Sigmoid colon (tissue), 7 donors: ENCODE measurements at regions of chr1 and their contacts with region 1.

Region 1: GRCh38 chr1:207797229-207797961 is 45.5 kb downstream of the CD46 start:
- DNase-seq: peak; percentile 88
- H3K4me3 ChIP-seq: no peak overlapping the region
- H3K27ac ChIP-seq: peak overlapping the region; percentile 17 to 55 (median 44)
- H3K4me1 ChIP-seq: peaks cover 0 to 9% (median 0%) of the 10 kb centered on the region in 4 donors
- H3K27me3 ChIP-seq: no peaks in the 10 kb centered on the region
- CTCF ChIP-seq: peak; percentile 61 to 80 (median 72)
- EP300 ChIP-seq: no peak
- POLR2A ChIP-seq: no peak

Region 2: DNA sequence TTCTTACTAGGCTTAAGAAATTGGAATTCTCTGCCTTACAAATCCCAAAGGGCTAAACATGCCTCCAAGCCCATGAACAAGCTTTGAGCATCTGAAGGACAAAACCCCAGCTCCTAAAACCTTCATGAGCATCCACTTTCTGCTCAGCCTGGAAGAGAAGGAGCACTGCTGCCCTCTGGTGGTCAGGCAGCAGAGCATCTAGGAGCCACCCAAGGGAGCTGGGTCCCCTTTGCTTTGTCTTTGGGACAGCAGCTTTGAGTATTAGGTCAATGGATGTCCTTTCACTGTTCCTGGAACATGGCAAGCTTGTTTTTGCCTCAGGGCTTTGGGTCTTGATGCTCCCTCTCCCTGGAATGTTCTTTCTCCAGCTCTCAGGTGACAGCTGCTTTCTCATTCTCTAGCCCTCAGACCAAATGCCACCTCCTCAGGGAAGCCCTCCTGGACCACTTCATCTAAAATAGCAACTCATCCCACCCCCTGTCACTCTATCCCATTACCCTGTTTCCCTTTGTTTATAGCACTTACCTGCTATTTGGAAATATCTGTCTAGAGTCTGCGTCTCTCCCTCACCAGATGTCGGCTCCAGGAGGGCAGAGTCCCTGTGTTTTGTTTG is 1819.9 kb before region 1 on chr1:
- intact Hi-C with region 1: no loop called
- DNase-seq: peak; percentile 76
- H3K4me3 ChIP-seq: no peak overlapping the region
- H3K27ac ChIP-seq: no peak overlapping the region
- H3K4me1 ChIP-seq: peaks cover 0 to 4% (median 0%) of the 10 kb centered on the region in 4 donors
- H3K27me3 ChIP-seq: no peaks in the 10 kb centered on the region
- CTCF ChIP-seq: peak; percentile 64 to 92 (median 90)
- EP300 ChIP-seq: no peak
- POLR2A ChIP-seq: no peak

Region 3: DNA sequence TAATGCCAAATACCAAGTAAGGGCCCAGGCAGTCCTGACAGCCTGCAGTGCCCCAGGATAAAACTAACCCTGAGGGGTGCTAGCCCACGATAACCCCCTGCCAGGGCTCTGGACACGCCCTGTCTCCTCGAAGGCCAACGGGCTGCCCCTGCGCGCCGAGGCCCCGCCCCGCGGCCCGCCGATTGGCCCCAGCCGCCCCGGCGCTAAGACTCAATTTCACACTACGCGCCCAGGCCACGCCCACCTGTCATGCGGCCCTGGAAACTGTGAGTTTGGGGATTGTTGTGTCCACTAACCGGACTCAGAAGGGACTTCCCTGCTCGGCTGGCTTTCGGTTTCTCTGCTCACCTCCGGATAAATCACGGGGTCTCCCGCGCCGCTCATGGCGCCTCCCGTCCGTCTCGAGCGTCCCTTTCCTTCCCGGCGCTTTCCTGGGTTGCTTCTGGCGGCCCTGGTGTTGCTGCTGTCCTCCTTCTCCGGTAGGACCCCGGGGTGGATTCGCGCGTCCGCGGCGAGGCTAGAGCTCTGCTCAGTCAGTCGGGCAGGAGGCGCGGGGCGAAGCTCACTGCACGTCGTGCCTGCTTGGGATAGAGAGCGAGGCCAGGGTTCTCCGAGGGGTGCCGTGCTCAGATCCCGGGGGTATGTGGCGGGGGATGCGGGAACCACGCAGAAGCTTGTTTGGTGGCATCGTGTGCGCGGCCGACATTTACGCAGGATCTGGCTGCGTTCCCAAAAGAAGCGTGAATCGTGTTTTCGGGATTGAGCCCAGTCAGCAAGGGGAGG is 152.4 kb before region 1 on chr1 and contains the start of gene CR1L:
- intact Hi-C with region 1: loop called (anchors 10 kb)
- DNase-seq: peak; percentile 83
- H3K4me3 ChIP-seq: peak within 1 kb of the TSS; percentile 45 to 60 (median 50)
- H3K27ac ChIP-seq: no peak within 1 kb of the TSS
- H3K4me1 ChIP-seq: peaks cover 0 to 13% (median 7%) of the 10 kb centered on the region in 4 donors
- H3K27me3 ChIP-seq: no peaks in the 10 kb centered on the region
- CTCF ChIP-seq: no peak
- EP300 ChIP-seq: no peak
- POLR2A ChIP-seq: no peak
- total RNA-seq, gene CR1L: not detected

Region 4: GRCh38 chr1:207751790-207752455 is 45.5 kb before region 1 on chr1 and contains the start of gene CD46:
- intact Hi-C with region 1: loop called (anchors 5 kb)
- DNase-seq: peak; percentile 98
- H3K4me3 ChIP-seq: peak within 1 kb of the TSS; percentile 75 to 93 (median 79)
- H3K27ac ChIP-seq: peak within 1 kb of the TSS; percentile 82 to 94 (median 88)
- H3K4me1 ChIP-seq: peaks cover 0 to 50% (median 42%) of the 10 kb centered on the region in 4 donors
- H3K27me3 ChIP-seq: no peaks in the 10 kb centered on the region
- CTCF ChIP-seq: no peak
- EP300 ChIP-seq: peak in 1 of 4 donors; percentile 32
- POLR2A ChIP-seq: peak; percentile 78 to 96
- total RNA-seq, gene CD46: 104 to 143 (median 113) TPM